ENCODE measurements at regions of chr20 and their contacts with region 1.

Region 1: GRCh38 chr20:52242237-52243230 is 51.0 kb upstream of the ZFP64 start:
- DNase-seq: no peak
- ATAC-seq: no peak
- H3K4me3 ChIP-seq: no peak overlapping the region
- H3K27ac ChIP-seq: no peak overlapping the region
- H3K4me1 ChIP-seq: no peaks in the 10 kb centered on the region
- H3K27me3 ChIP-seq: no peaks in the 10 kb centered on the region
- CTCF ChIP-seq: peak; percentile 63

Region 2: DNA sequence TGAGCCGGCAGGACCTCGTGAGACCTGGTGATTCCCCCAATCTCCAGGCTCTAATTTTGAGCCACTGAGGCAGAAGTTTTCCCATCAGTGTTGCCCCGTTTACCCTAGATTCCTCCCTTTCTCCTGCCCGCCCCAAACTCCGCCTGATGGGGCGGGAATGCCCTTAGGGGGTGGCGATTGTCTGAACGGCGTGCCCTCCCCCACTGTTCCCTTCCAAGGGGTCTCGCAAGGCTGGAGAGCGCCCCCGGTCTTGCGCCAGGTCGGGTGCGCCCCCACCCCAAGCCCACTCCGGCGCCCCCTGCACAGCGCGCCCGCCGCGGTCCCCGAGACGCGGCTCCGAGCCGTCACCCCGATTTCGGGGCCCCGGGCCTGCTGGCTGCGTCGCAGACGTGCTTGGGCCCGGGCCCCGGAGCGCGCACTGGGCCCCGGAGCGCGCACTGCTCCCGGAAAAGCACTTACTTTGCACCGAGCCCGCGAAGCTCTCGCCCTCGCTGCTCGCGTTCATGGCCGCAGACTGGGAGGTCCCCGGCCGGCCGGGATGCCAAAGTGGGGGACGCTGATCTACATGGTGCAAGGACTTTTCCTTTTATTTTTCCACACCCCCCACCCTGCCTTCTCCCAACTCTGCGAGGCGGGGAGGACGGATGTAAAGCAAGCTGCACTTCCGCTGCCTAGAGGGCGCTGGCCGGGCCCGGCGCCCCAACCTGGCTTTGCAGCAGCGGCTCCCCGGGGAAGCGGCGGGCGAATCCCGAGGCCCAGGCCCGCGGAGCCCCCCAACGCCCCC is 51.2 kb before region 1 on chr20 and contains the start of gene ZFP64:
- intact Hi-C with region 1: no loop called
- DNase-seq: peak; percentile 71 to 77
- ATAC-seq: peak; percentile 83 to 95 (median 94)
- H3K4me3 ChIP-seq: peak within 1 kb of the TSS; percentile 97
- H3K27ac ChIP-seq: peak within 1 kb of the TSS; percentile 75
- H3K4me1 ChIP-seq: peaks cover 6% of the 10 kb centered on the region
- H3K27me3 ChIP-seq: no peaks in the 10 kb centered on the region
- CTCF ChIP-seq: peak; percentile 41
- total RNA-seq, gene ZFP64: 3.1 to 6.5 (median 4.0) TPM

Region 3: GRCh38 chr20:52379723-52380336 is 137.3 kb after region 1 on chr20:
- intact Hi-C with region 1: loop called in 1 of 2 experiments (anchors 5 kb)
- DNase-seq: peak; percentile 19 to 56
- ATAC-seq: no peak
- H3K4me3 ChIP-seq: no peak overlapping the region
- H3K27ac ChIP-seq: no peak overlapping the region
- H3K4me1 ChIP-seq: no peaks in the 10 kb centered on the region
- H3K27me3 ChIP-seq: peaks cover 0 to 2% (median 0%) of the 10 kb centered on the region in 3 donors
- CTCF ChIP-seq: peak; percentile 69